GM13976 (cell line): ENCODE measurements at regions of chr21 and their contacts with region 1.

Region 1: GRCh38 chr21:34614633-34615486 is at the start of gene RCAN1:
- DNase-seq: peak; percentile 93
- CTCF ChIP-seq: no peak

Region 2: DNA sequence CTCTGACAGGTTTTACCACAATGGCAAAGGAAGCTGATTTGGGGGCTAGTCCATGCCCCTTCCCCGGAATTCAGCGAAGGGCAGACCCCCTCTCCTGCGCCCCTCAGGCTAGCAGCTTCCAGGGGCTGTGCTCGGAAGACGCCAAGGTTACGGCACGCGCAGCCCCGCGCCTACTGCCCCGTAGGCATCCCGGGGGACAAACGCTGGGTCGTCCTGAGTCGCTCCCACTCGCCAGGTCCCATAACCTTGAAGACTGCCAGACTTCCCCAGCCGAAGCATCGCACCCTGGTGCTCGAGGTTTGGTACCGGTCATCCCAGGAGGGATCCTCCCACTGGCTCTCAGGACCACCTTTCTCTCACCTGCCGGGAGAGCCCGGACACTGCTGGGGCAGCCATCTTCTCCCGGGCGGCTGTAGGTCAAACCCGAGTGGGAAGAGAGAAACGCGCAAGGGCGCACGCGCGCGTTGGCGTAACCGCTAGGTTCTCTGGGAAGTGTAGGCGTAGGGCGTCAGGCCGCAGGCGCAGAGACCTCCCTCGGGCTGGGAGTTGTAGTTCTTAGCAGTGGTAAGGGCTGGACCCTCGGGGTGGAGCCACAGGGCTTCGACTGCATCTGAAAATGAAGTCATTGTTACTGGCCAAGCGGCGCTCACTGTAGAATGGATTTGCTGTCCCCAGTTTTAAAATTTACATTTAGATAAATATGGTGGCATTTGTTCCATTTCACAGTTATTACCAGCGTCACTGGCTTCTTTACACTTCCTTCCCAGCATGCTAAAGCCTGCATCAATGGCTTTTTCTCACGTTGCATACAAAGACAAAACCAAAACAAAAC is 699.3 kb before region 1 on chr21 and contains the start of gene ATP5PO:
- in situ Hi-C with region 1: loop called (anchors 25 kb)
- DNase-seq: peak; percentile 95
- CTCF ChIP-seq: no peak

Region 3: GRCh38 chr21:34302521-34302920 is 312.3 kb before region 1 on chr21:
- in situ Hi-C with region 1: no loop called
- DNase-seq: no peak
- CTCF ChIP-seq: no peak